ENCODE measurements at regions of chr9 and their contacts with region 1.

Region 1: GRCh38 chr9:130860458-130861316 is 25.6 kb downstream of the ABL1 start:
- DNase-seq: peak; percentile 79
- H3K4me3 ChIP-seq: no peak overlapping the region
- H3K27ac ChIP-seq: peak overlapping the region in 1 of 2 donors; percentile 62
- H3K4me1 ChIP-seq: no peaks in the 10 kb centered on the region
- H3K27me3 ChIP-seq: no peaks in the 10 kb centered on the region
- CTCF ChIP-seq: peak; percentile 18 to 25 (median 24)
- POLR2A ChIP-seq: no peak

Region 2: DNA sequence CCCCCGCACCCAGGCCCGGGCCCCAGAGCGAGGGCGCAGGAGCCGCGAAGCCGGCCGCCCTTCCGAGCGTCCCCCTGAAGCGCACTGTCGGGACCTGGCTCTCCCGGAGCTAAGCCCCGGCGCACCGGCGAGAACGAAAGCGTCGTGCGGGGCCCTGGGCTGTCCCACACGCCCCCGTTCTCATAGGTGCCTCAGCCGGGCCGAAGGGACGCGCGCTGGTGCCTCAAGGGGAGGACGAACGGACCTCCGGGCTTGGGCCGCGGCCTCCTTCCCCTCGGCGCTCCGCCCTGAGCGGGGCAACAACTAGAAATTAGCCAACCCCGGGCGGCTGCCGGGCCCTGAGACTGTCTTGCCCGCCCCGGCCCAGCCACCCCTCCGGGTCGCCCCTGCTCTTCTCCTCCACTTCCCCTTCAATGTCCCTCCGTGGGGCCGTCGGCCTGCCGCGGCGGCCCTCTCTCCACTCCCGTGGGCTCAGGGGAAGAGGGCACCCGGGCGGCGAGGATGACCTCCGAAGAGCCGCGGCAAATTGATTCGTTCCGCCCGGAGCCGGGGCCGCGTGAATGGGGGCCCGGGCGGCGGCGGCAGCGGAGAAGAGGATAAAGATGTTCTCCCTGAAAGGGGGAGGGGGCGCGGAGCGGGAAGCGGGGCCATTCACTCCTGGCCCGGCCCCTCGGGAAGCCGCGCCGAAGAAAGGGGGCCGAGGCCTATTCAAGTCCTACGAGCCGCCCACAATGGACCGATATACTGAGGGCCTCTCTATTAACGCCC is 199.8 kb before region 1 on chr9:
- intact Hi-C with region 1: no loop called
- DNase-seq: no peak
- H3K4me3 ChIP-seq: peak overlapping the region; percentile 14 to 21
- H3K27ac ChIP-seq: no peak overlapping the region
- H3K4me1 ChIP-seq: peaks cover 17% of the 10 kb centered on the region
- H3K27me3 ChIP-seq: peaks cover 17% of the 10 kb centered on the region
- CTCF ChIP-seq: no peak
- POLR2A ChIP-seq: no peak

Region 3: DNA sequence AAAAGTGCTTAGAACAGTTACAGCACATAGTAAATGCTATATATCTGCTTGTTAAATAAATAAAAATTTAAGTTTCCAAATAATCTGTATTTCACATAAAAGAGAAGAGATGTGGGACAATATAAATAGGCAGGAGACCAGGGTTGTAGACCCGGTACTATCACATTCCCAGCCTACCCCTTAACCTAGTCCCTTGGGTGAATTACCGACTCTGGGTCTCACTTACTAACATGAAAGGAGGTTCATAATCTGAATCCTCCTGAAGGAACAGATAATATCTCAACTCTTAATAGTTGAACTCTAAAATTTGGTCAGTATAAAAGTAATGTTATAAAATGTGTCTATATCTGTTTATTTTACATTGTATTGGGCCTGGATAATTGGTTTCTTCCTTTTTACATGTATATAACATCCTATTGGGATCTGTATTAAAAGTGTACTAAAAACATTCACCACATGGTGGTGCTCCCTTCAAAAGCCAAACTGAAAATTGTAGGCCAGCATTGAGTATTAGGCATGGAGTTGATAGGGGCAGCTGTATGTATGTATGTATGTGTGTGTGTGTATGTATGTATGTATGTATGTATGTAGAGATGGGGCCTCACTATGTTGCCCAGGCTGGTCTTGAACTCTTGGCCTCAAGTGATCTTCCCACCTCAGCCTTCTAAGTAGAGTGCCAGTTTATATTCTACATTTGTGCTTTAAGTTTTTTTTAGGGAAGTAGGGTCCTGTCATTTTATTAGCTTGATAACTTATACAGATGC is 89.8 kb before region 1 on chr9:
- intact Hi-C with region 1: loop called (anchors 5 kb)
- DNase-seq: no peak
- H3K4me3 ChIP-seq: no peak overlapping the region
- H3K27ac ChIP-seq: no peak overlapping the region
- H3K4me1 ChIP-seq: no peaks in the 10 kb centered on the region
- H3K27me3 ChIP-seq: no peaks in the 10 kb centered on the region
- CTCF ChIP-seq: peak; percentile 60 to 73 (median 63)
- POLR2A ChIP-seq: no peak

Region 4: DNA sequence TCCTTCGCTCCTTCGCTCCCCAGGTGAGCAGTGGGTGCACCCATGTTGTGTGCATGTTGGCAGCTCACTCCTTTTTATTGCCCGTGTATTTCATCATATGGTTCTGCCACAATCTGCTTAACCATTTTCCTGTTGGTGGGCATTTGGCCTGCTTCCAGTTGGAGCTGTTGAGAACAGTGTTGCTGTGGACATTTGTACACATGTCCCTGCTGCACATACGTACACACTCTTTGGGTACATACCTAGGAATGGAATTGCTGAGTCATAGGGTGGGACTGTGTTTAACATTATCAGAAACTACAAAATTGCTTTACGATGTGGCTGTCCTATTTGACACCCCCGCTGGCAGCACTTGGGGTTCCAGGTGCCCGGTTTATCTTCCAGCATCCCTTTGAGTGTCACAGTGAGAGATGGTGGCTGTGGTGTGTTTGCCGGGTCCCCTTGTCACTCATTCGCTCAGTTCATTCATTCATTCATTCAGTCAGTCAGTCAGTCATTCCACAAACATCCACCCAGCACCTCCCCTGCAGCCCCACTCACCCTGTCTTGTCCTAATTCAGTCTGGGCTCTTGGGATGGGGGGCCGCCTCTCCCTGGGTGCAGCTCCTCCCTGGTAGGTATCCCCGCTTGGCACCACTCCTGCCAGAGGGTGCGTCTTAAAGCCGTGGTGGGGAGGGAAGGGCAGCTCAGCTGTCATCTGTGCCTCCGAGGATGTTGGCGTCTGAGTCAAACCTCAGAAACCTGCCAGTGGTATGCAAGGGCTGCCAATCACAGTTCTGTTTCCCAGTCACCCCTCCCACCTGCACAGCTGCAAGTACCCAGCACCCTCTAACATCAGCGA is 86.3 kb after region 1 on chr9:
- intact Hi-C with region 1: no loop called
- DNase-seq: no peak
- H3K4me3 ChIP-seq: no peak overlapping the region
- H3K27ac ChIP-seq: no peak overlapping the region
- H3K4me1 ChIP-seq: no peaks in the 10 kb centered on the region
- H3K27me3 ChIP-seq: no peaks in the 10 kb centered on the region
- CTCF ChIP-seq: no peak
- POLR2A ChIP-seq: no peak

Region 5: GRCh38 chr9:130990978-130991777 is 130.5 kb after region 1 on chr9:
- intact Hi-C with region 1: no loop called
- DNase-seq: peak; percentile 45
- H3K4me3 ChIP-seq: no peak overlapping the region
- H3K27ac ChIP-seq: no peak overlapping the region
- H3K4me1 ChIP-seq: no peaks in the 10 kb centered on the region
- H3K27me3 ChIP-seq: no peaks in the 10 kb centered on the region
- CTCF ChIP-seq: no peak
- POLR2A ChIP-seq: no peak

Region 6: DNA sequence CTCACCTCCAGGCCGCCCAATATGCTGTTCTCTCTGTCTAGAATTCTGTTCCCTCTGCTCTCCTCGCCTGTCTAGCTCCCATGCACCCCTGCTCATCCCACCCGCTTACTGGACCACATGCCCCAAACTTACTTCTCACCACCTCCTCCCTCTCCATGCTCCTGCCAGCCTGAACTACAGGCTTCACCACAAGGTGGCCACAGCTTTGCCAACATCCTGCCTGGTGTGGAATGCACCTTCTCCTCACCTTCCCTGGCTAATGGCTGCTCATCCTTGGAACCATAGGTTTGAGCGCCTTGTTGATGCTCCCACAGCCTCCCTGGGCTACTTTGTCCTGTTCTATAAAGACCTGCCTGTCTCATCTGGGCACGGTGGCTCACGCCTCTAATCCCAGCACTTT is 157.9 kb after region 1 on chr9:
- intact Hi-C with region 1: no loop called
- DNase-seq: no peak
- H3K4me3 ChIP-seq: no peak overlapping the region
- H3K27ac ChIP-seq: no peak overlapping the region
- H3K4me1 ChIP-seq: peaks cover 30% of the 10 kb centered on the region
- H3K27me3 ChIP-seq: no peaks in the 10 kb centered on the region
- CTCF ChIP-seq: no peak
- POLR2A ChIP-seq: no peak